ENCODE measurements at regions of chr4 and their contacts with region 1.

Region 1: DNA sequence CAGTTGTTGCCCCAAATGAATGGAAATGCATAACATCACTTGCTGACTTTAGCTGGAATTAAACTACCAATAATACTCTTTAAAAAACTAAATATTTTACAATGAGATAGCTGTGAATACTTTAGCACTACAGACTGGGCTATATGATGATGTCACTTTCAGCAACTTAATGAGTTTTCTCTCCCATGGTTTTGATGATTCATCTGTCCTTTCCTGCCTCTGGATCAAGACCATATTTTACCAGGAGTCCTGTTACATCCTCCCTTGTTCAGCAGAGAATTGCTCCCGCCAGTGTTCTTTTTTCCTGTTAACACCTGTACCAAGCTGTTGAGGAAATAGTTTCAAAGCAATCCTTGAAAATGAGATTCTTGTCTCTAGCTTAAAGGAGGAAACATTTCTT is 543.0 kb downstream of the SPRY1 start:
- DNase-seq: no peak
- ATAC-seq: peak in 3 of 4 donors; percentile 50 to 71 (median 51)
- H3K4me3 ChIP-seq: no peak overlapping the region
- H3K27ac ChIP-seq: no peak overlapping the region
- H3K4me1 ChIP-seq: peaks cover 7% of the 10 kb centered on the region
- H3K27me3 ChIP-seq: no peaks in the 10 kb centered on the region
- CTCF ChIP-seq: no peak

Region 2: DNA sequence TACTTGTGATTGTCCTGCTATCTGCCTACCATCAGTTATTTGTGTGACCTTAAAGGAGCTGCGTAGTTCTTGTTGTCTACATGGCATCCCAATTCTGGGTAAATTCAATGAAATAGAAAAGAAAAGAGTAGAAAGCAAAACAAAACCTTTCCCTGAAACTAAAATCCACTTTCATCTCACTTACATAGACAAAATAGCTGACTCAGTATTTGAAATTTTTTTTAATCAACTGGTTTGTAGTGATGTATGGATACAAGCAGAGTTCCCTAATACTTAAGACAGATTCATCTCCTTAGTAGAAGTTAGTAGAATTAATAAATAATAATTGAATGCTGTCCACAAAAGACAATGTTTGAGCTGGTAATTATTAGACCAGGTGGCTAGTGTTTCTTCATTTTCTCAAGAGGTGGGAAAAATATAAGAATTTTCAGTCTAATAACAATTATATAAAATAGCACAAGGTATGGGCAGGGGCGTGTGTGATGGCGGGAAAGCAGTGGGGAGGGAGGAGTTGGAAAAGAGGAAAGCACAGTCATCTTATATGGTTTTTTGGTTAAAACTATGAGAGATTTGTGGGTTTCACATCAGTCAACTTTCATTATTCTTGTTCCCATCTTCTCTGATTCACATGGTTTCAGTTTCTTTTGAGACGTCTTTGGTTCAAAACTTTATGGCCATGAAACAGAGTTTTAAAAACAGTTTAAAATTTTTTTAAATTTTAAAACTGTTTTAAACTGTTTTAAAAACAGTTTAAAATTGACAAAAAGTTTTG is 267.8 kb before region 1 on chr4:
- intact Hi-C with region 1: loop called in 1 of 2 experiments (anchors 10 kb)
- DNase-seq: no peak
- ATAC-seq: no peak
- H3K4me3 ChIP-seq: peak overlapping the region; percentile 12
- H3K27ac ChIP-seq: no peak overlapping the region
- H3K4me1 ChIP-seq: peaks cover 14% of the 10 kb centered on the region
- H3K27me3 ChIP-seq: no peaks in the 10 kb centered on the region
- CTCF ChIP-seq: no peak

Measured in psoas muscle (tissue), 8 donors.